H1 (cell line): ENCODE measurements at regions of chr10 and their contacts with region 1.

Region 1: GRCh38 chr10:6920072-6921019 is 340.3 kb upstream of the PRKCQ start:
- DNase-seq: peak; percentile 47 to 76
- H3K4me3 ChIP-seq: no peak overlapping the region
- H3K27ac ChIP-seq: no peak overlapping the region
- H3K4me1 ChIP-seq: no peaks in the 10 kb centered on the region
- H3K27me3 ChIP-seq: no peaks in the 10 kb centered on the region
- CTCF ChIP-seq: peak; percentile 82 to 98 (median 92)
- EP300 ChIP-seq: no peak
- POLR2A ChIP-seq: no peak
- RAD21 ChIP-seq: peak; percentile 90 to 93

Region 2: GRCh38 chr10:6885284-6885683 is 35.1 kb before region 1 on chr10:
- CTCF ChIA-PET with region 1: interaction called, 15 read pairs
- POLR2A ChIA-PET with region 1: no interaction called
- DNase-seq: no peak
- H3K4me3 ChIP-seq: no peak overlapping the region
- H3K27ac ChIP-seq: no peak overlapping the region
- H3K4me1 ChIP-seq: peaks cover 0 to 7% (median 4%) of the 10 kb centered on the region in 4 experiments; a peak in 3 of 7 replicates
- H3K27me3 ChIP-seq: no peaks in the 10 kb centered on the region
- CTCF ChIP-seq: no peak
- EP300 ChIP-seq: no peak
- POLR2A ChIP-seq: no peak
- RAD21 ChIP-seq: no peak

Region 3: GRCh38 chr10:7150349-7150748 is 230.0 kb after region 1 on chr10:
- CTCF ChIA-PET with region 1: no interaction called
- POLR2A ChIA-PET with region 1: no interaction called
- DNase-seq: no peak
- H3K4me3 ChIP-seq: no peak overlapping the region
- H3K27ac ChIP-seq: no peak overlapping the region
- H3K4me1 ChIP-seq: peaks cover 0 to 4% (median under 1%) of the 10 kb centered on the region in 4 experiments; a peak in 3 of 7 replicates
- H3K27me3 ChIP-seq: no peaks in the 10 kb centered on the region
- CTCF ChIP-seq: no peak
- EP300 ChIP-seq: no peak
- POLR2A ChIP-seq: no peak
- RAD21 ChIP-seq: no peak